ENCODE measurements at regions of chr17 and their contacts with region 1.

Region 1: GRCh38 chr17:61402978-61403800 is 3.5 kb downstream of the TBX2 start:
- DNase-seq: peak in 1 of 35 experiments; percentile 47
- ATAC-seq: peak; percentile 29 to 63 (median 46)
- H3K4me3 ChIP-seq: peak overlapping the region; percentile 21 to 50
- H3K4me3 Mint-ChIP-seq: peak overlapping the region; percentile 60 to 66 (median 66)
- H3K27ac ChIP-seq: no peak overlapping the region
- H3K27ac Mint-ChIP-seq: no peak overlapping the region
- H3K4me1 ChIP-seq: peaks cover 10 to 73% of the 10 kb centered on the region in 2 experiments
- H3K4me1 Mint-ChIP-seq: peaks cover 45 to 55% (median 46%) of the 10 kb centered on the region in 3 donors
- H3K27me3 ChIP-seq: peaks cover 3 to 95% of the 10 kb centered on the region in 2 experiments
- H3K27me3 Mint-ChIP-seq: peaks cover 52 to 75% of the 10 kb centered on the region in 2 donors

Region 2: DNA sequence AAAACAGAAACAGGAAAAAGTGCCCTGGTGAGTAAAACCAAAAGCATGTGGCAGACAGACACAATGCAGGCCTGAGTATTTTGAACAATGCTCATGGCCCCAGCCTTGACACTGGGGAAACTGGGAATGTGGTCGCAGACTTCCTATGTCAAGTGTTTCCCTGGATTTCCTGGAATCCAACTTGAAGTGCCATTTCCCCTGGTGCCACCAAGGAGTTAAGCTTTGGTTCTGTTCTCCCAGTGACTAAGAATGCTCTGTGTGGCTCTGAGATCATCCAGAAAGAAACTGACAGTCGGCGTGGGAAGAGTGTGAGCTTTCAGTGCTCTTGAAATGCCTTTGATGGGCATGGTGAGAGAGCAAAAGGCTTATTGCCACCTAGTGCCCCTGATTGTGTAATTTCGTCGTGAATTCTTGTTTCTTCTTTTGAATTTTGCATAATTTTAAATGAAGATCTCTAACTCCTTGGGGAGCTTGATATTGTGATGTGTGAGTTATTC is 1975.7 kb before region 1 on chr17:
- CTCF ChIA-PET with region 1: no interaction called
- POLR2A ChIA-PET with region 1: no interaction called
- DNase-seq: peak in 1 of 35 experiments; percentile 25
- ATAC-seq: peak in 2 of 4 experiments; percentile 24 to 59
- H3K4me3 ChIP-seq: no peak overlapping the region
- H3K4me3 Mint-ChIP-seq: no peak overlapping the region
- H3K27ac ChIP-seq: no peak overlapping the region
- H3K27ac Mint-ChIP-seq: peak overlapping the region in 1 of 2 donors; percentile 28
- H3K4me1 ChIP-seq: no peaks in the 10 kb centered on the region
- H3K4me1 Mint-ChIP-seq: peaks cover 7 to 9% (median 8%) of the 10 kb centered on the region in 3 donors
- H3K27me3 ChIP-seq: peaks cover 0 to 2% of the 10 kb centered on the region in 2 experiments
- H3K27me3 Mint-ChIP-seq: no peaks in the 10 kb centered on the region

Region 3: GRCh38 chr17:61862975-61863800 is 460.0 kb after region 1 on chr17 and contains the start of gene BRIP1:
- CTCF ChIA-PET with region 1: interaction called in 1 of 2 experiments, 3 read pairs
- POLR2A ChIA-PET with region 1: interaction called, 3 to 10 read pairs
- DNase-seq: peak; percentile 69 to 93 (median 85)
- ATAC-seq: peak; percentile 99
- H3K4me3 ChIP-seq: peak within 1 kb of the TSS; percentile 81 to 96
- H3K4me3 Mint-ChIP-seq: peak within 1 kb of the TSS; percentile 94 to 97 (median 95)
- H3K27ac ChIP-seq: peak within 1 kb of the TSS; percentile 61
- H3K27ac Mint-ChIP-seq: peak within 1 kb of the TSS; percentile 93 to 94
- H3K4me1 ChIP-seq: peaks cover 4 to 12% of the 10 kb centered on the region in 2 experiments
- H3K4me1 Mint-ChIP-seq: peaks cover 27 to 37% (median 30%) of the 10 kb centered on the region in 3 donors
- H3K27me3 ChIP-seq: no peaks in the 10 kb centered on the region
- H3K27me3 Mint-ChIP-seq: no peaks in the 10 kb centered on the region
- total RNA-seq, gene BRIP1: 1.4 to 3.5 (median 1.7) TPM

Measured in T-cell (primary cell).